ENCODE measurements at regions of chr12 and their contacts with region 1.

Region 1: GRCh38 chr12:86860776-86861175 is 604.6 kb upstream of the MGAT4C start:
- DNase-seq: no peak
- H3K4me3 Mint-ChIP-seq: no peak overlapping the region
- H3K27ac Mint-ChIP-seq: no peak overlapping the region
- H3K4me1 Mint-ChIP-seq: no peaks in the 10 kb centered on the region
- H3K27me3 Mint-ChIP-seq: no peaks in the 10 kb centered on the region

Region 2: DNA sequence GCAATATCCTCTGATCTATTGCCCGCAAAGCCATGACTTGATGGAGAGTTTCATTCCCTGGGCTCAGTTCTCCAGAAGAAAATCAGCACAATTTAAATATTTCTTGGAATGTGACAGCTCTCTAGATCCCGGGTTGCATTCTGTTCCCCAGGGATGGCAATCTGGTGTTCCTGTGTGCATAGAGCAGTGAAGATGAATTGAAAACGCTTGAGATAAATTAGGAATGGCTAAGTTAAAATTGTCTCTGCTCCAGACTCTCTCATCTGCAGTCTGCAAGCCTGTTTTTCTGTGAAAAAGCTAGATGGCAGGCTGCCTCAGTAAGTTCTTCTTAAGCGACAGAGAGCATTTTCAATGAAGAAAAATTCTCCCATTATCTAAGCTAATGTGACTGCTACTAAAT is 22.1 kb before region 1 on chr12:
- intact Hi-C with region 1: loop called (anchors 1 kb)
- DNase-seq: no peak
- H3K4me3 Mint-ChIP-seq: no peak overlapping the region
- H3K27ac Mint-ChIP-seq: no peak overlapping the region
- H3K4me1 Mint-ChIP-seq: no peaks in the 10 kb centered on the region
- H3K27me3 Mint-ChIP-seq: no peaks in the 10 kb centered on the region

Region 3: DNA sequence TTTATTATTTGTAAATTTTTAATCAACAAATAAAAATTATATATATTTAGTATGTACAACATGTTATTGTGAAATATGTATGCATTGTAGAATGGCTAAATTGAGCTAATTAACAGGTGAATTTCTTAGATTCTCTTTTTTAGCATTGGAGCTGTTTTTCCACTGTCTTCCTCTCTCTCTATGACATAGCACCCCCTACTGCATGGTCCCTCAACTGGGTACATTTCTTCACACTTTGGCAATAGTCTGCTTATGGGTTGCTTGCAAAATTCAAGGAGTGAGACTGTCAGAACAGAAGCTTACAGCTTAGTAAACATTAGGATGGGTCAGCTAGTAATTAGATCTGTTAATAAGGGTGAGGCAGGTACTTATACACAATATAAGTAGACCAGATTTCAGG is 53.9 kb after region 1 on chr12:
- intact Hi-C with region 1: loop called (anchors 2 kb)
- DNase-seq: no peak
- H3K4me3 Mint-ChIP-seq: no peak overlapping the region
- H3K27ac Mint-ChIP-seq: no peak overlapping the region
- H3K4me1 Mint-ChIP-seq: no peaks in the 10 kb centered on the region
- H3K27me3 Mint-ChIP-seq: no peaks in the 10 kb centered on the region